T-cell (primary cell): ENCODE measurements at regions of chr12 and their contacts with region 1.

Region 1: GRCh38 chr12:52895061-52895887 is 9.6 kb downstream of the KRT8 start:
- DNase-seq: no peak
- ATAC-seq: no peak
- H3K4me3 ChIP-seq: no peak overlapping the region
- H3K4me3 Mint-ChIP-seq: no peak overlapping the region
- H3K27ac ChIP-seq: no peak overlapping the region
- H3K27ac Mint-ChIP-seq: no peak overlapping the region
- H3K4me1 ChIP-seq: no peaks in the 10 kb centered on the region
- H3K4me1 Mint-ChIP-seq: no peaks in the 10 kb centered on the region
- H3K27me3 ChIP-seq: peaks cover 0 to 25% of the 10 kb centered on the region in 2 experiments
- H3K27me3 Mint-ChIP-seq: peaks cover 0 to 8% of the 10 kb centered on the region in 2 donors

Region 2: DNA sequence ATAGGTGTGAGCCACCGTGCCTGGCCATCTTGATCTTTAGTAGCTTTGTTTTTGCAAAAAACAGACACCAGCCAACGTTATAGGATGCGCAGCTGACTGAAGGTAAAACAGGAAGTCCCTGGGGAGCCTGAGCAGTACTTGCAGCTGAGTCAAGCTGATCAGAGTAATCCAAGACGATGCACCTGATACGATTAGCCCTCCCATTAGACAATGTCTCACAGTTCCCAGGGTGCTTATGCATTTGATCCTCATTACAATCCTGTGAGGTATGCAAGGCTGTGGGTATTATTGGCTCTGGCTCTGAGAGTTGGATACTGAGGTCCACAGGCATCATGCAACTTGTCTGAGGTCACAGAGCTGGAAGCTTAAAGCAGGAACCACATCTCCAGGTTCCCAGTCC is 61.7 kb after region 1 on chr12:
- CTCF ChIA-PET with region 1: interaction called in 1 of 2 experiments, 10 read pairs
- POLR2A ChIA-PET with region 1: no interaction called
- DNase-seq: peak in 3 of 35 experiments; percentile 11 to 22 (median 15)
- ATAC-seq: peak; percentile 52 to 77 (median 65)
- H3K4me3 ChIP-seq: no peak overlapping the region
- H3K4me3 Mint-ChIP-seq: no peak overlapping the region
- H3K27ac ChIP-seq: no peak overlapping the region
- H3K27ac Mint-ChIP-seq: peak overlapping the region; percentile 16 to 71
- H3K4me1 ChIP-seq: no peaks in the 10 kb centered on the region
- H3K4me1 Mint-ChIP-seq: peaks cover 0 to 7% (median 7%) of the 10 kb centered on the region in 3 donors
- H3K27me3 ChIP-seq: no peaks in the 10 kb centered on the region
- H3K27me3 Mint-ChIP-seq: peaks cover 0 to 4% of the 10 kb centered on the region in 2 donors